ENCODE measurements at regions of chr9 and their contacts with region 1.

Region 1: DNA sequence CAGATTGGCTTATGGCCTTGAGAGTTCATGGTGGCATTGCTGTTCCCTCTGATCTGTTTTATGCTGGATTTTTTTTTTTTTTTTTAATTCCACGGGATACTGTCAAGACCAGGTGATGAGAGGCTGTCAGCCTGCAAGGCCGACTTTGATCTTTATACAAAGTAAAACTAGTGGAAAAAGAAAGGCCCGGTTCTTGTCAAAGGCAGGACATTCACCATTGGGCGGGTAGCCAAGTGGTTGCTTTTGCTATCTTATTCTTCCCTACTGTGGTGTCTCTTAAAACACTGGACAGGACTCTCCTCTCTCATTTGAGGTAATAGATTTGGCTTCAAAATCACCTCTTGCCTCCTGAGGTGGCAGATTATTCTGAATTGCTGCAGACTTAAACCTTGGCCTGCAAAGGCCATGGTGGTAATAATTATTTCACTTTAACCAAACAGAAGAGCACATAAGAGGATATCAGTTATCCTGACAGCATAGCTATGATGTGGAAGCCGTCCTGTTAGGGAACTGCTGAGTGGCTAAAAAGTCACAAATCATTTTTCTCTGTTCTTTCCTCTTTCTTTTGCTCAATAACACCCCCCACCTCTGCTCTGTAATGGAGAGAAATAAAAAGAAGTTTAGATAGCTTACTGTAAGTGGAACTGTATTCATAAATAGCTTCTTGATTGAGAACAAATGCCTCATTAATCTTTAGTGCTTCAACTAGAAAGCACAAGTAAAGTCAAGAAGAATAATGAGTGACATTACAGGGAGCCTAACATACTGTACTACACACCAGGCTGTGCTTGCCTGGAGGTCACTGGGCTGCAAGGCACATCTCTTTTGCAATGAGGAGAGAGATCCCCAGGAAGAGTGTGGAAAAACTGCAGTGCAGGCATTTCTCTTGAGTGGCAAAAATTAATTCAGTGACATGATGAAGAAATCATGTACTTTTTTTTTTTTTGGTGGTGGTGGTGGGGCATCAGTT is 275.6 kb downstream of the KDM4C start:
- DNase-seq: no peak
- ATAC-seq: no peak
- H3K4me3 ChIP-seq: no peak overlapping the region
- H3K27ac ChIP-seq: no peak overlapping the region
- H3K4me1 ChIP-seq: no peaks in the 10 kb centered on the region
- H3K27me3 ChIP-seq: no peaks in the 10 kb centered on the region
- CTCF ChIP-seq: no peak

Region 2: DNA sequence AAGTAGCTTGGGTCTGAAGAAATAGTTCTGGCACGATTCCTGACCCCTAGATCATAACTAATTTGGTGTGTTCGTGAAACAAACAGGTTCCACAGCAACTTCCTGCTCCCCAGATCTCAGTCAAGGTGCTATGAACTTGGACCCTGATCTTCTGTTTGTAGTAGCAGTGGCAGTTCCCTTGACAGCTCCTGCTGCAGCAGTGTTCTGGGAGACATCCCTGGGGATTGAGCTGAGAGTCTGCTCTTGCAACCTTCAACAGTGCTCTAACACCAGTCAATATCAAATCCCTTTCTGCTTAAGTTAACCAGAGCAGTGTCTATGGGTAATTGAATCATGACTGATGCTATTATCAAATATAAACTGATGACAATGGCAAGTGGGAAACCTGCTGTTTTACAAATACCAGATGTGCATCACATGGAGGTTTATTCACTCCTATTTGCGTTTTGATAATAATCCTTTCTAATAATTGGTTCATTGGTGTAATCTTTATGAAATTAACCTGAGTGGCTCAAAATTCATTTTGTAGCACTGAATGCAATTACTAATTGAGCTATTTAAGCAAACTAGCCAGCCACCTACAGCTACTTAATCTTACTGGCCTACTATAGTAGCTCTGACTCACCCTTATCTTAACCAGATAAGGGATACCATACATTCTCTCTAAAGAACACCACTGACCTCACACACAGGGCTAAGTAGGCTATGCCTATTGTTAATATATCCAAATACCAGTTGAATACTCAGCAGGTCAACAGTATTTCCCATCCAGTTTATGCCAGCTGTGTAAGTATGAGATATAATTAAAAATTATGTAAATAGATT is 253.7 kb before region 1 on chr9:
- CTCF ChIA-PET with region 1: no interaction called
- POLR2A ChIA-PET with region 1: no interaction called
- intact Hi-C with region 1: no loop called
- DNase-seq: no peak
- ATAC-seq: no peak
- H3K4me3 ChIP-seq: no peak overlapping the region
- H3K27ac ChIP-seq: no peak overlapping the region
- H3K4me1 ChIP-seq: no peaks in the 10 kb centered on the region
- H3K27me3 ChIP-seq: no peaks in the 10 kb centered on the region
- CTCF ChIP-seq: no peak

Region 3: DNA sequence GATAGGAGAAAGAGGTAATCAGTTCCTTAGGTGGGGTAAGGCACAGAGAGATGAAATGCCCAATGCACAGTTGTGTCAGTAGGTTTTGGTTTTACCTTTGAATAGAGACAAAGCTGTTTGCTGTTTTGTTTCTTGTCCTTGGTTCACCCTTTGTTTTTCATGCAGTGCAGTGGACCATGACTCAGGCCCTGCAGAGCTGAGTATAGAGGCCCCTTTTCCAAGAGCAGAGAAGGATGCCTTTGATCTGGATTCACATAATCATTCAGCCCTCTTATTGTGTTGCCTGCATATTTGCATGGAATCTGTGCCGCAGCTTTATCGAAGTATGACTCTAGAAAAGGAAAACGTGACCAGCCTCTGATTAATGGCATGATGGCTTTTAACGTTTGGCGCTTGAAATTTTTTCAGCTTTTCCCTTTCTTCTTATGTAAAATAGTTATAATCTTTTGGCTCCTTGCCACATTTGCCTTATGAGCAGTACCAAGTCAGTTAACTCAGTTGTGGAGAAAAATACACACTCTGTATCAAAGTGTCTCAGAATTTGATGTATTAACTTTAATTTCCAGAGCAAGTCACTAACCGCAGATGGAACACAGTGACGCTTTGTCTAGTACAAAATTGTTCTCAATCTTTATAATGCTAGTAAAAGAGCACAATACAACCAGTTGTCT is 78.0 kb before region 1 on chr9:
- CTCF ChIA-PET with region 1: no interaction called
- POLR2A ChIA-PET with region 1: interaction called, 12 read pairs
- intact Hi-C with region 1: no loop called
- DNase-seq: no peak
- ATAC-seq: no peak
- H3K4me3 ChIP-seq: no peak overlapping the region
- H3K27ac ChIP-seq: no peak overlapping the region
- H3K4me1 ChIP-seq: no peaks in the 10 kb centered on the region
- H3K27me3 ChIP-seq: no peaks in the 10 kb centered on the region
- CTCF ChIP-seq: no peak

Measured in PC-3 (cell line).